Activated CD4-positive, alpha-beta T cell treated with anti-CD3 and anti-CD28 coated beads, Interleukin-2, amount 10 ng/mL, durations not matched to agents 24 days and 14 days (primary cell): ENCODE measurements at regions of chr12 and their contacts with region 1.

Region 1: GRCh38 chr12:39443081-39443928 is at the start of gene KIF21A:
- DNase-seq: peak; percentile 96
- H3K4me3 Mint-ChIP-seq: peak within 1 kb of the TSS; percentile 95
- H3K27ac Mint-ChIP-seq: peak within 1 kb of the TSS; percentile 97
- H3K4me1 Mint-ChIP-seq: peaks cover 17% of the 10 kb centered on the region
- H3K27me3 Mint-ChIP-seq: peaks cover 14% of the 10 kb centered on the region
- total RNA-seq, gene KIF21A: 28.1 and 29.5 TPM in 2 replicates

Region 2: DNA sequence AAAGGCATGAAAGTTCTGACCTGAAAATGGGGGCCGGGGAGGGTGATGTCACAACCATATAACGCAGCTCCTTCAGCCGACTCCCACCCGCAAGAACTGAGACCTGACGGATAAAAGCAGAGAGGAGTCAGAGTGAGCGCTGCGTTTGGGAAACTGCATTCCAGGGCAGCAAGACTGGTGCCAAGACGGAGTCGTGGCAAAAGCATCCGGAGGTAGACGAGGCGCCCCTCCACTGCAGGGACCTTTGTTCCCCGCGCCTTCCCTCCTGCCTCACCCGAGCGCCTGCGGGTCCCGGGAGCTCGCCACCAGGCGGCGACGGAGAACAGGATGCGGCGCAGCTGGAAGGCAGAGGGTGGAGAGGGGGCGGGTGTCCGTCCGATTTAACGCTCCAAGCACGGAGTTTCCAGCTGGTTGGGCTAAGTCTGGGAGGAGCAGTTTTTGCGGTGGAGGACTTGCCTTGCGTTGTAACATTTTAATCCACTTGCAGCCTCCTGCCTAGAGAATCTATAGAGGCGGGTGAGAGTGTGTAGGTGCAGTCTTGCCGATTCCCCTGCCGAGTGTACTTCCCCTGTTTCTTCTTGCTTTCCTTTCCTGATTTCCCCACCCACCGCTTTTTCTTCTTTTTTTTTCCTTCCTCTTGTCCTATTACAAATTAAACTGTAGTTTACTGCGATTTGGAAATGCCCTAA is 536.7 kb before region 1 on chr12:
- intact Hi-C with region 1: loop called (anchors 10 kb)
- DNase-seq: peak; percentile 93
- H3K4me3 Mint-ChIP-seq: peak overlapping the region; percentile 93
- H3K27ac Mint-ChIP-seq: peak overlapping the region; percentile 95
- H3K4me1 Mint-ChIP-seq: peaks cover 32% of the 10 kb centered on the region
- H3K27me3 Mint-ChIP-seq: peaks cover 18% of the 10 kb centered on the region

Region 3: GRCh38 chr12:39127401-39127800 is 315.9 kb before region 1 on chr12:
- intact Hi-C with region 1: no loop called
- DNase-seq: no peak
- H3K4me3 Mint-ChIP-seq: no peak overlapping the region
- H3K27ac Mint-ChIP-seq: no peak overlapping the region
- H3K4me1 Mint-ChIP-seq: no peaks in the 10 kb centered on the region
- H3K27me3 Mint-ChIP-seq: no peaks in the 10 kb centered on the region

Region 4: GRCh38 chr12:39372929-39373328 is 70.4 kb before region 1 on chr12:
- intact Hi-C with region 1: loop called (anchors 2 kb)
- DNase-seq: peak; percentile 60
- H3K4me3 Mint-ChIP-seq: peak overlapping the region; percentile 3
- H3K27ac Mint-ChIP-seq: peak overlapping the region; percentile 71
- H3K4me1 Mint-ChIP-seq: peaks cover 18% of the 10 kb centered on the region
- H3K27me3 Mint-ChIP-seq: no peaks in the 10 kb centered on the region

Region 5: DNA sequence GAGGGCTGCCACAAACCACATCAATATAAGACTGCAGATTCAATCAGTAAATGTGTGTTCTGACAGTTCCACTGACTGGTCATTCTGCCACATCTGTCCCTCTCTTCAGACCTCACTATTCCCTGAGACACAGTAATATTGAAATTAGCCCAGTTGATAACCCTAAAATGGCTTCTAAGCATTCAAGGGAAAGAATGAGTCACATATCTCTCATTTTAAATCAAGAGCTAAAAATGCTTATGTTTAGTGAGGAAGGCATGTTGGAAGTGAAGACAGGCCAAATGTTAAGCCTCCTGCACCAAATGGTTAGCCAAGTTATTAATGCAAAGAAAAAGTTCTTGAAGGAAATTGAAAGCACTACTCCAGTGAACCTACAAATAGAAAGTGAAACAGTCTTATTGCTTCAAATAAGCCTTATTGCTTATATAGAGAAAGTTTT is 24.1 kb after region 1 on chr12:
- intact Hi-C with region 1: loop called (anchors 1 kb)
- DNase-seq: no peak
- H3K4me3 Mint-ChIP-seq: peak overlapping the region; percentile 48
- H3K27ac Mint-ChIP-seq: peak overlapping the region; percentile 13
- H3K4me1 Mint-ChIP-seq: peaks cover 16% of the 10 kb centered on the region
- H3K27me3 Mint-ChIP-seq: no peaks in the 10 kb centered on the region

Region 6: DNA sequence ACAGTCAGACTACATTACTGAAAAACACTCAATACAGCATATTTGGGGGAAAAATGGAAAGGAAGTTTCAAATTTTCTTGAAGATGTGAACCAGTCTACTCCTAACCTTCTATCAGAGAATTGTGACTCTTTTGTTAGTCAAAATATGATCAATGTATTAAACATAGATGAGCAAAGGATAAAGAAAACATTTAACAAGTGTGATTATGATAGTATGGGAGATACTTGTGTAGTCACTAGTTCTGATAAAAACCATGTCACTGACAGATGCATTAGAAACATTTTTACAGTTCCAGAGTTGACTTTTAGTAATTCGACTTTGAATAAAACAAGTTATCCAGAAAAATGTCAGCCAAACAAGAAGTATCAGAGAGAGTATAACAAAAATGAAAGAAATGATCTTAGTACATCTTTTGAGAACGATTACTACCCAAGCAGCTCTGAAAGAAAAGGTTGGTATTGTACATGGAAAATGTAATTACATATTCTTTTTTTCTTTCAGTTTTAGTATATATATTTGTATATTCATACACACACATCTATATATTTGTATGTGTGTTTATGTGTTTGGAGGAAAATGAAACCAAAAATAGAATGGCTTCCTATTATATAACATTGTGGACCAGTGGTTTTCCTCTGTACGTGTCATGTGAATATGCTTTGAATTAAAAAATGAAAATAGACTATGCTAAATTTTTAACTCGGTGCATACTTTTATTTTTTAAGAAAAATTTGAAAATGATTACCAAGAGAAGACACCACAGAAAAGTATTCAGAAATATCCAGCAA is 239.6 kb after region 1 on chr12:
- intact Hi-C with region 1: loop called (anchors 10 kb)
- DNase-seq: no peak
- H3K4me3 Mint-ChIP-seq: peak overlapping the region; percentile 78
- H3K27ac Mint-ChIP-seq: peak overlapping the region; percentile 78
- H3K4me1 Mint-ChIP-seq: peaks cover 40% of the 10 kb centered on the region
- H3K27me3 Mint-ChIP-seq: no peaks in the 10 kb centered on the region

Region 7: DNA sequence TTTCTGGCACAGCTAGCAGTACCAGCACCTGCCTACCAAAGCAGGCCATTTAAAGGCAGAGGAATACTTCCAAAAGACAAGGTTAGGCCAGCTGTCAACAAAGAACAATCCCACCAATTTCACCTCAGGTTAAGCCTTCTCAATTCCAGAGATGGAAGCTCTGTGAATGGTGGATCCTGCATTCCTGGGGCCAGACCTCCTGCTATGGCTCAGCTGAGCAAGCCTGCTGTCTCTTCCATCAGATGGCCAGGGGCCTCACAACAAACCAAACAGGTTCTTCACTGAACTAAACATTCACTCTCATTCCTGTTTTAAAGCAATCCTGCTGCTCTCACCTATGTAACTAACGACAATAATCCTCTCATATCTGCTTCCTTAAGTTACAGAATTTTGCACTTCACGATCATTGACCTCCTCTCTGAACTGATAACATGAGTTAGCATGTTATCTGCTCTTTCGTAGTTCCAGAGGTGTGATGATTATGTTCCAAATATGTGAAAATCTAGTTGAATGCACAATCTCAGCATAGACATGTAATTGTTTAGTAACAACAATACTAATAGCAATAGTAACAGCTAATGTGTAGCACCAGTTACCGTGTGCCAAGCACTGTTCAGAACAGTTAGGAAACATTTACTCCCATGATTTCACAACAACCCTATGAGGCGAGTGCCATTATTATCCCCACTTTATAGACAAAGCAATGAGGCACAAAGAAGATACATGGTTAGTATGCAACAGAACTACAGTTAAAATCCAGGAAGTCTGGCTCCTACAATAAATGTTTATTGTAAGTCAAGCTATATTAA is 589.3 kb after region 1 on chr12:
- intact Hi-C with region 1: no loop called
- DNase-seq: no peak
- H3K4me3 Mint-ChIP-seq: no peak overlapping the region
- H3K27ac Mint-ChIP-seq: no peak overlapping the region
- H3K4me1 Mint-ChIP-seq: no peaks in the 10 kb centered on the region
- H3K27me3 Mint-ChIP-seq: no peaks in the 10 kb centered on the region